ENCODE measurements at regions of chr12 and their contacts with region 1.

Region 1: GRCh38 chr12:4191642-4192041 is 81.9 kb upstream of the CCND2 start:
- DNase-seq: no peak
- ATAC-seq: peak; percentile 99
- H3K4me3 ChIP-seq: no peak overlapping the region
- H3K27ac ChIP-seq: no peak overlapping the region
- H3K4me1 ChIP-seq: no peaks in the 10 kb centered on the region
- H3K27me3 ChIP-seq: no peaks in the 10 kb centered on the region
- CTCF ChIP-seq: no peak
- EP300 ChIP-seq: no peak
- POLR2A ChIP-seq: no peak
- RAD21 ChIP-seq: no peak

Region 2: GRCh38 chr12:4154672-4155225 is 36.9 kb before region 1 on chr12:
- CTCF ChIA-PET with region 1: no interaction called
- POLR2A ChIA-PET with region 1: interaction called, 5 read pairs
- RAD21 ChIA-PET with region 1: no interaction called
- SMC1A ChIA-PET with region 1: interaction called, 12 read pairs
- in situ Hi-C with region 1: no loop called
- intact Hi-C with region 1: no loop called
- DNase-seq: no peak
- ATAC-seq: 0 out of 3 replicates have a peak, but pooled peaks have one; percentile 3
- H3K4me3 ChIP-seq: no peak overlapping the region
- H3K27ac ChIP-seq: peak overlapping the region; percentile 92
- H3K4me1 ChIP-seq: peaks cover 57% of the 10 kb centered on the region
- H3K27me3 ChIP-seq: no peaks in the 10 kb centered on the region
- CTCF ChIP-seq: no peak
- EP300 ChIP-seq: no peak
- POLR2A ChIP-seq: no peak
- RAD21 ChIP-seq: no peak

Region 3: GRCh38 chr12:4174417-4174816 is 17.2 kb before region 1 on chr12:
- CTCF ChIA-PET with region 1: interaction called, 4 read pairs
- POLR2A ChIA-PET with region 1: interaction called, 3 read pairs
- RAD21 ChIA-PET with region 1: no interaction called
- SMC1A ChIA-PET with region 1: interaction called, 17 read pairs
- in situ Hi-C with region 1: no loop called
- intact Hi-C with region 1: no loop called
- DNase-seq: no peak
- ATAC-seq: no peak
- H3K4me3 ChIP-seq: no peak overlapping the region
- H3K27ac ChIP-seq: no peak overlapping the region
- H3K4me1 ChIP-seq: peaks cover 19% of the 10 kb centered on the region; the same call in 1 of the 2 replicates
- H3K27me3 ChIP-seq: no peaks in the 10 kb centered on the region
- CTCF ChIP-seq: no peak
- EP300 ChIP-seq: no peak
- POLR2A ChIP-seq: no peak
- RAD21 ChIP-seq: no peak

Region 4: DNA sequence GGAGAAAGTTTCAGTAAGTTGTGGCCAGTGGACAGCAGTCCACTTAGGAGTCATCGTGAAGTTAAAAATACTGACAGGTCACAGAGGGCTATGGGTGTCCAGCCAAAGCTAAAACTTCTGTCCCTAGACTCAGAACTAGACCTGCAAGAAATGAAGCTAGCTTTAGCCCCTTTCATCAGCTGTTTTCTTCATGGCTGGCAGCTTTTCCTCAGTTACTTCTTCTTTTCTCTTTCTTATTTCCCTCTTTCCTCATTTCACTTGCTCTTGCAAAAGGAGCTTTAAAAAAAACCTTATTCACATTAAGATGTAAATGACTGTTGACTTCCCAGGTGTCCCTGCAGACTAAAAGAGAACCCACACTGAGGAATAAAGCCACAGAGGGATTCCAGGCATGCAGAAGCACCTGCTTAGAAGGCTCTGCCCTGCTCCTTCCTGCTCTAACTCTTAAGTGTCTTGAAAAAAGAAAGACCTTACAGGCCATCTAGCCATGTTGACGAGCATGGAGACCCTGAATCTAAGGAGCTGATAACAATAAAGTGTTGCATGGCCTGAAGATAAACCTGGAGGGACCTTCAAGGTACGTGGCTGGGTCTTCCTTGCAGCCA is 12.2 kb after region 1 on chr12:
- CTCF ChIA-PET with region 1: interaction called, 6 read pairs
- POLR2A ChIA-PET with region 1: interaction called, 4 read pairs
- RAD21 ChIA-PET with region 1: interaction called, 4 read pairs
- SMC1A ChIA-PET with region 1: interaction called, 30 read pairs
- in situ Hi-C with region 1: no loop called
- intact Hi-C with region 1: no loop called
- DNase-seq: no peak
- ATAC-seq: no peak
- H3K4me3 ChIP-seq: no peak overlapping the region
- H3K27ac ChIP-seq: no peak overlapping the region
- H3K4me1 ChIP-seq: peaks cover 6% of the 10 kb centered on the region
- H3K27me3 ChIP-seq: no peaks in the 10 kb centered on the region
- CTCF ChIP-seq: no peak
- EP300 ChIP-seq: no peak
- POLR2A ChIP-seq: no peak
- RAD21 ChIP-seq: no peak

Measured in GM12878 (cell line).